Posterior vena cava (tissue), 2 donors: ENCODE measurements at regions of chr11 and their contacts with region 1.

Region 1: DNA sequence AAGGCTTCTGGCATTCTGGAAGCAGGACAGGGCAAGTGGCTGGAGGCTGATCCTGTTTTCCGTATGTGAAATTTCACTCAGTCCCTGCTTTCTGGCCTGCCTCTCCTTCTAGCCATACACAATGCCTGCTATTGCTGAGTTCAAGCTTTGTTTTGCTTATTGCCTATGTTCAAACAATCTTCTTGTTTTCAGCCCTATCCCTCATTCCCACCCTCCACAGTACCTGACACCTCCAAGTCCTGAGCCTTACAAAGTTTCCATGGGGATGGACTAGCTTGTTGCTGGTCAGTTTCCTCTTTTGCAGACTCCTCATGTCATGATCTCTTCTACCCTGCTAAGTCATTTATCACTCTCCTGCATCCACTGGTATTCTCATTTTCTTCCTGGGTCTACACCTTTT is 38.1 kb downstream of the FAM76B start:
- DNase-seq: no peak

Region 2: GRCh38 chr11:95076416-95076815 is 675.1 kb before region 1 on chr11:
- intact Hi-C with region 1: loop called in 1 of 2 experiments (anchors 10 kb)
- DNase-seq: no peak

Region 3: DNA sequence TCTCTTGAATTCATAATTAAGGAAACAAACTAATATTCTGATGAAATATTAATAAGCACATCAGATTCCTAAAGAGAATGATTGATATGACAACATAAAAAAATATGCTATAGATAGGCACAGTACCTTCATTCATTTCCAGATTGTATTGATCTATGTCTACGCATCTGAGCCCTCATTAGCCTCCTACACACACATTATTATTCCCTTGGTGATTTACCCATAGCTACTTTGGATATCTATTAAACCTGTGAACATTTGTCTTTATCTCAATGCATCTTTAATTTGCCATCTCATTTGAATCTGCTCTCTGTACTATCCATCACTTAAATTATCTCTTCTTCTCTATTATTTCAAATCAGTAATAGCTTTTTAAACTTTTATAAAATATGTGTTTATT is 538.9 kb before region 1 on chr11:
- intact Hi-C with region 1: no loop called
- DNase-seq: no peak

Region 4: DNA sequence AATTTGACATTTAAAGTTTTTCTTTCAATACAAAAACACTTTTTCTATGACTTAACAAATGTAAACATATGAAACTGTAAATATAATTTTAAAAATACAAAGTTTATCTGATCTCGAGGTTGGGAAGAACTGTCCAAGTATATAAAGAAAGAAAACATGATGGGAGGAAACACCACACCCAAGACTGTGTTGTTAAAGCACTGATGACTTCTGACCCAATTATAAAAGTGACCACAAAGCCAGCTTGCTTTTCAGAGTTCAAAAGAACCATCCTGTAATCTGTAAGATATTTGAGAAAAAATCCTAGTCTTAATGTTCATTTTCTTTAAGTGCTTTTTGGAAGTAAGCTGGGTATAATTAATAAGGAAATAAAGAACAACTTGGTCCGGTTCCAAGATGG is 54.4 kb after region 1 on chr11:
- intact Hi-C with region 1: no loop called
- DNase-seq: no peak